Posterior vena cava (tissue), 2 donors: ENCODE measurements at regions of chr11 and their contacts with region 1.

Region 1: DNA sequence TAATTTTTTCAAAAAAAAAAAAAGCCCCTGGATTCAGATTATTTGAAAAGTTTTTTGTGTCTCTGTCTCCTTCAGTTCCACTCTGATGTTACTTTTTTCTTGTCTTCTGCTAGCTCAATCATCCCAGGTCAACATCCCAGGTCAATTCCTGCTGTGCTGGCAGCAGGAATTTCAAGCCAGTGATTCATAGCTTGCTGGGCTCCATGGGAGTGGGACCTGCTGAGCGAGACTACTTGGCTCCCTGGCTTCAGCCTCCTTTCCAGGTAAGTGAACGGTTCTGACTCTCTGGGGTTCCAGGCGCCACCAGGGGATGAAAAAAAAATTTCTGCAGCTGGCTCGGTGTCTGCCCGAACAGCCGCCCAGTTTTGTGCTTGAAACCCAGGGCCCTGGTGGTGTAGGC is 31.4 kb downstream of the PLAAT5 start:
- DNase-seq: no peak

Region 2: DNA sequence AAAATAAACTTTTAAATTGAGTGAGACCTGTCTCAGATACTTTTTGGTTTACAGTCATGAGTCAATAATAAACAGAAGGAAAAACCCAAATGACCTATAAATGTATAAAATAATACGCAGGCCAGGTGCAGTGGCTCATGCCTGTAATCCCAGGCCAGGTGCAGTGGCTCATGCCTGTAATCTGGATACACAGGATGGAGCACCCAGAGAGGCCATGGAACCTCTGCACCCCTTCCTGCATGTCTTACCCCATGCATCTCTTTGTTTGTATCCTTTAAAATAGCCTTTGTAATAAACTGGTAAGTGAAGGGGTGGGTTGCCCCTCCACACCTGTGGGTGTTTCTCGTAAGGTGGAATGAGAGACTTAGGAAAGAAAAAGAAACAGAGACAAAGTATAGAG is 68.1 kb after region 1 on chr11:
- intact Hi-C with region 1: loop called in 1 of 2 experiments (anchors 2 kb)
- DNase-seq: no peak

Region 3: GRCh38 chr11:63582935-63583677 is 123.5 kb after region 1 on chr11:
- intact Hi-C with region 1: no loop called
- DNase-seq: no peak

Region 4: DNA sequence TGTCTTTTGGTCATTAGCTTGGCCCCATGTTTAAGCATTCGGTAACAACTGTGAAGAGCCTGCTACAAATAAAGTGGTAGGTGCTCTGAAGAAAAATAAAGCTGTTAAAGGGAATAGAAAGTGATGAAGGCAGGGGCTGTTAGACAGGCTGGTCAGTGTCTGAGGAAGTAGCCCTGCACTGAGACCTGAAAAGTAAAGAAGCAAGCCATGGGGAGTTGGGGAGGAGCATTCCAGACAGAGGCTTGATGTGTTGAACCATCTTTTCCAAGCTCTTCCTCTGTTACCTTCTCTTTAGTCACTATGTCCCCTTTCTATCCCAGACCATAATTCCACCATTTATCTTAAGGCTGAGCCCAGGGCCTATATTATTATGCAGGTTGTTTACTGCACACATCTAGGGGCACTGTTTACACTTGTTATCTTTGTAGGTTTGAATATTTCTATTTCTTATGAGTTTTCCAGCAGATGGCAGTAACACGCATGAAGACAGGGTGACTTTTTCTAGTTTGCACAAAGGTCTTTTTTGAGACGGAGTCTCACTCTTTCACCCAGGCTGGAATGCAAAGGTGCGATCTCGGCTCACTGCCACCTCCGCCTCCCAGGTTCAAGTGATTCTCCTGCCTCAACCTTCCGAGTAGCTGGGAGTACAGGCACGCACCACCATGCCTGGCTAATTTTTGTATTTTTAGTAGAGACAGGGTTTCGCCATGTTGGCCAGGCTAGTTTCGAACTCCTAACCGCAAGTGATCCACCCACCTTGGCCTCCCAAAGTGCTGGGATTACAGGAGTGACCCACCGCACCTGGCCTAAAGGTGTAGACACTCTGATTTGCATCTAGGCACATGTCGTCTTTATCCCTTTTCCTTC is 286.0 kb after region 1 on chr11:
- intact Hi-C with region 1: loop called in 1 of 2 experiments (anchors 10 kb)
- DNase-seq: no peak